ENCODE measurements at regions of chr12 and their contacts with region 1.

Region 1: DNA sequence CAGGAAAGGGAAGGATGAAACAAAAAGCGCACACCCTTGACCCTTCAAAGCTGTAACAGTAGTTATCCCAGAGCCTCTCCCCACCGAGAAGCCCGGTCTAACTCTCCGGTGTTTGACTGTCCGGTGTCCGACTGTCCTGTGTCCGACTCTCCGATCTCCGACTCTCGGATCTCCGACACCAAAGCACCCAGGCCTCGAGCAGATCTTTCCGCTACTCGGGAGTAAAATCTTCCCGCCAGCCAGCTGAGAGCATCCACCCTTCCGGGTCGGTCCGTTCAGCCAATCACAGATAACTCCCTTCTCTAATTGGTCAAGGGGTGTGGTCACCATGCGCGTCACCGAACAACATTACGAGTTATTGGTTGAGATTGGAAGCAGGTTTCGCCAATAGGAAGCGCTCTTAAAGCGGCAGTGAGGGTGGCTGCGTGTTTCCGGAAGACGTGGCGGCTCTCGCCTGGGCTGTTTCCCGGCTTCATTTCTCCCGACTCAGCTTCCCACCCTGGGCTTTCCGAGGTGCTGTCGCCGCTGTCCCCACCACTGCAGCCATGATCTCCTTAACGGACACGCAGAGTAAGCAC is at the starts of genes GOLT1B and RECQL:
- DNase-seq: peak; percentile 93 to 96 (median 95)
- H3K4me3 ChIP-seq: peak within 1 kb of the TSS; percentile 77 to 93
- H3K4me3 Mint-ChIP-seq: no peak within 1 kb of the TSS
- H3K27ac ChIP-seq: peak within 1 kb of the TSS; percentile 78
- H3K27ac Mint-ChIP-seq: peak within 1 kb of the TSS in 1 of 7 donors; percentile 71
- H3K4me1 ChIP-seq: peaks cover 64% of the 10 kb centered on the region
- H3K4me1 Mint-ChIP-seq: peaks cover 28 to 61% (median 46%) of the 10 kb centered on the region in 4 donors
- H3K27me3 ChIP-seq: no peaks in the 10 kb centered on the region
- H3K27me3 Mint-ChIP-seq: no peaks in the 10 kb centered on the region
- total RNA-seq, gene GOLT1B: 33.0 to 39.1 TPM
- total RNA-seq, gene RECQL: 64.0 to 67.8 TPM

Region 2: GRCh38 chr12:21296751-21297406 is 204.6 kb before region 1 on chr12:
- CTCF ChIA-PET with region 1: no interaction called
- POLR2A ChIA-PET with region 1: no interaction called
- intact Hi-C with region 1: loop called (anchors 10 kb)
- DNase-seq: peak in 4 of 5 donors; percentile 3 to 15 (median 14)
- H3K4me3 ChIP-seq: no peak overlapping the region
- H3K4me3 Mint-ChIP-seq: no peak overlapping the region
- H3K27ac ChIP-seq: no peak overlapping the region
- H3K27ac Mint-ChIP-seq: no peak overlapping the region
- H3K4me1 ChIP-seq: no peaks in the 10 kb centered on the region
- H3K4me1 Mint-ChIP-seq: peaks cover 0 to 11% (median 3%) of the 10 kb centered on the region in 4 donors
- H3K27me3 ChIP-seq: no peaks in the 10 kb centered on the region
- H3K27me3 Mint-ChIP-seq: peaks cover 0 to 3% of the 10 kb centered on the region in 2 donors

Region 3: DNA sequence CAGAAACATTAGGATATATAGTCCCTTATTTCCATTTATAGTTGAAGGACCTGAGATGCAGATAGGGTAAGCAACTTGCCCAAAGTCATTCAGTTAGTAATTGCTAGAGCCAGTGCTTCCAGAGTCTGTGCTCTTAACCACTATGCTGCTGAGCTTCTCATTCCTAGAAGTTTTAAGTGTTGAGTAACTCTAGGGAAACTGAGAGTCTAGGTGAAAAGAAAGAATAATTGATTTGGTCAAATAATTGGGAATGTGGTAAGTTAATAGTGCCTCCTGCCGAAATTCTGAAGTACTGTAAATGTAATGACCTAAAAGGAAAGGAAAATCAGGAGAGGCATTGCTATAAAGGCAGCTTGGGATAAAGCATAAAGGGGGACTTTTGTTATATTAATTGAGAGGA is 49.9 kb before region 1 on chr12:
- CTCF ChIA-PET with region 1: no interaction called
- POLR2A ChIA-PET with region 1: interaction called, 16 read pairs
- intact Hi-C with region 1: loop called (anchors 1 kb)
- DNase-seq: no peak
- H3K4me3 ChIP-seq: no peak overlapping the region
- H3K4me3 Mint-ChIP-seq: peak overlapping the region in 1 of 8 donors; percentile 53
- H3K27ac ChIP-seq: no peak overlapping the region
- H3K27ac Mint-ChIP-seq: peak overlapping the region in 5 of 7 donors; percentile 2 to 88 (median 67)
- H3K4me1 ChIP-seq: peaks cover 40% of the 10 kb centered on the region
- H3K4me1 Mint-ChIP-seq: peaks cover 27 to 43% (median 37%) of the 10 kb centered on the region in 4 donors
- H3K27me3 ChIP-seq: no peaks in the 10 kb centered on the region
- H3K27me3 Mint-ChIP-seq: no peaks in the 10 kb centered on the region

Region 4: GRCh38 chr12:21539797-21540196 is 38.3 kb after region 1 on chr12:
- CTCF ChIA-PET with region 1: no interaction called
- POLR2A ChIA-PET with region 1: no interaction called
- intact Hi-C with region 1: no loop called
- DNase-seq: no peak
- H3K4me3 ChIP-seq: no peak overlapping the region
- H3K4me3 Mint-ChIP-seq: no peak overlapping the region
- H3K27ac ChIP-seq: no peak overlapping the region
- H3K27ac Mint-ChIP-seq: no peak overlapping the region
- H3K4me1 ChIP-seq: no peaks in the 10 kb centered on the region
- H3K4me1 Mint-ChIP-seq: no peaks in the 10 kb centered on the region
- H3K27me3 ChIP-seq: no peaks in the 10 kb centered on the region
- H3K27me3 Mint-ChIP-seq: peaks cover 3% of the 10 kb centered on the region in 2 donors

Region 5: DNA sequence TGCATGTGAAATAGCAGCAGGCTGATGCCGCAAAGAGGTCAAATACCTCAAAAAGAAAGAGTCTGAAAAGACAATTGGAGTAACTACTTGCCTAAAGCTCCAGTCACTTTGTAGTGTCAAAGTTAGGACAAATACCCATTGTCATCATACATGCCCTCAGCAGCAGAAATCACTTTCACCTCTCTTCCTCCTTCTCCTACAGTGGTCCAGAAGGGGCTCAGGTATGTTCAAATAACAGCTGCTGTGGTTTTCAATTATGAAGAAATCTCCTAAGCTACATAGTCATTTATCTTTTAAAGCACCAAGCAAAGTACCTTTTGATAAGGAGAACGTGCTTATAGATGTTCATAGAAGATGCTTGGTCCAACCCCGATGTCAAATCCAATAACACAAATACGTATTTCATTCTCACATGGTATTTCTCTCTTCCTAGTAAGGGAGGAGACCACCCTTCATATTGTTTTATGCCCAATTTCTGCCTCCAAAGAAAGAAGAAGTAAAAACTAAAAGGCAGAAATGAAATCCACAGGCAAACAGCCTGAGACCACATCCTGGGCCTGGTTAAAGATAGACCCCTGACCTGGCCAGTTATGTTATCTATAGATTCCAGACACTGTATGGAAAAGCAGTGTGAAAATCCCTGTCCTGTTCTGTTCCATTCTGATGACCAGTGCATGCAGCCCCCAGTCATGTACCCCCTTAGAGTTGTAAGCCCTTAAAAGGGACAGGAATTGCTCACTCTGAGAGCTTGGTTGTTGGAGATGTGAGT is 79.5 kb after region 1 on chr12:
- CTCF ChIA-PET with region 1: no interaction called
- POLR2A ChIA-PET with region 1: no interaction called
- intact Hi-C with region 1: no loop called
- DNase-seq: no peak
- H3K4me3 ChIP-seq: no peak overlapping the region
- H3K4me3 Mint-ChIP-seq: no peak overlapping the region
- H3K27ac ChIP-seq: no peak overlapping the region
- H3K27ac Mint-ChIP-seq: no peak overlapping the region
- H3K4me1 ChIP-seq: no peaks in the 10 kb centered on the region
- H3K4me1 Mint-ChIP-seq: no peaks in the 10 kb centered on the region
- H3K27me3 ChIP-seq: no peaks in the 10 kb centered on the region
- H3K27me3 Mint-ChIP-seq: peaks cover 7 to 9% of the 10 kb centered on the region in 2 donors

Region 6: GRCh38 chr12:21613931-21614330 is 112.5 kb after region 1 on chr12:
- CTCF ChIA-PET with region 1: no interaction called
- POLR2A ChIA-PET with region 1: interaction called, 4 read pairs
- intact Hi-C with region 1: loop called (anchors 5 kb)
- DNase-seq: no peak
- H3K4me3 ChIP-seq: peak overlapping the region in 1 of 2 donors; percentile 18
- H3K4me3 Mint-ChIP-seq: peak overlapping the region in 6 of 8 donors; percentile 0 to 79 (median 42)
- H3K27ac ChIP-seq: peak overlapping the region; percentile 1
- H3K27ac Mint-ChIP-seq: peak overlapping the region in 6 of 7 donors; percentile 65 to 89 (median 86)
- H3K4me1 ChIP-seq: peaks cover 58% of the 10 kb centered on the region
- H3K4me1 Mint-ChIP-seq: peaks cover 41 to 64% (median 53%) of the 10 kb centered on the region in 4 donors
- H3K27me3 ChIP-seq: no peaks in the 10 kb centered on the region
- H3K27me3 Mint-ChIP-seq: no peaks in the 10 kb centered on the region

Region 7: DNA sequence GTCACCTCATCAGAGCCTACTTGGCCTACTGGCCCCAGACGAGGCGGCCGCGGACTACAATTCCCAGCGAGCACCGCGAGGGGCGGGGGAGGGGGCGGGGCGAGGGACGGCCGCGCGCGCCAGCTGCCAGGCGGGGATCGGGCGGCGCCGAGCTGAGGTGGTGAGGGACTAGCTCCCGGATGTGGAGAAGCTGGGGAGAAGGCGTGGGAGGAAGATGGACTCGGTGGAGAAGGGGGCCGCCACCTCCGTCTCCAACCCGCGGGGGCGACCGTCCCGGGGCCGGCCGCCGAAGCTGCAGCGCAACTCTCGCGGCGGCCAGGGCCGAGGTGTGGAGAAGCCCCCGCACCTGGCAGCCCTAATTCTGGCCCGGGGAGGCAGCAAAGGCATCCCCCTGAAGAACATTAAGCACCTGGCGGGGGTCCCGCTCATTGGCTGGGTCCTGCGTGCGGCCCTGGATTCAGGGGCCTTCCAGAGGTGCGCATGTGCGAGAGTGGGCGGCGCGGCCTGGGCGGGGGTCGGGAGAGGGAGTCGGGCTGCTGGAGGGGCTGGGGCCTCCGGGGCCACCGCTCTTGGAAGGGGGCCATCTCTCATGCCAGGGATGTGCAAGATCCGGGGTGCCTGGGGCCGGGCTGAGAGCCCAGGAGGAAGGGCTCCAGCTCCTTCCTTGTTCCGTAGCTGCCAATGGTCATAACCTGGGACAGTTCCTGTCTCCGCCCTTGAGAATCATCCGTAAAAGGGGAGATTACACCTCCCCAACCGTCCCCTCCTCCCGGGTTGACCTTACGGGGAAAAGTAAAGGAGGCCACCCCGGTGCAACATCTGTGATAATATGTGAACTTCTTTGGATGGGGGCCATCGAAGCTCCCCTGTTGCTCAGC is 544.9 kb after region 1 on chr12 and contains the start of gene CMAS:
- CTCF ChIA-PET with region 1: no interaction called
- POLR2A ChIA-PET with region 1: no interaction called
- intact Hi-C with region 1: loop called (anchors 2 kb)
- DNase-seq: peak; percentile 63 to 81 (median 71)
- H3K4me3 ChIP-seq: peak within 1 kb of the TSS; percentile 87 to 91
- H3K4me3 Mint-ChIP-seq: peak within 1 kb of the TSS; percentile 90 to 98 (median 96)
- H3K27ac ChIP-seq: peak within 1 kb of the TSS; percentile 75
- H3K27ac Mint-ChIP-seq: peak within 1 kb of the TSS; percentile 85 to 95 (median 91)
- H3K4me1 ChIP-seq: peaks cover 35% of the 10 kb centered on the region
- H3K4me1 Mint-ChIP-seq: peaks cover 33 to 50% (median 39%) of the 10 kb centered on the region in 4 donors
- H3K27me3 ChIP-seq: no peaks in the 10 kb centered on the region
- H3K27me3 Mint-ChIP-seq: peaks cover 0 to 1% of the 10 kb centered on the region in 2 donors
- total RNA-seq, gene CMAS: 20.1 to 20.3 TPM

Region 8: GRCh38 chr12:22624870-22625761 is 1123.6 kb after region 1 on chr12 and contains the start of gene ETNK1:
- CTCF ChIA-PET with region 1: no interaction called
- POLR2A ChIA-PET with region 1: interaction called, 4 read pairs
- intact Hi-C with region 1: loop called (anchors 10 kb)
- DNase-seq: peak; percentile 76 to 85 (median 81)
- H3K4me3 ChIP-seq: peak within 1 kb of the TSS; percentile 80 to 93
- H3K4me3 Mint-ChIP-seq: peak within 1 kb of the TSS; percentile 92 to 99 (median 93)
- H3K27ac ChIP-seq: peak within 1 kb of the TSS; percentile 80
- H3K27ac Mint-ChIP-seq: peak within 1 kb of the TSS; percentile 93 to 99 (median 98)
- H3K4me1 ChIP-seq: peaks cover 36% of the 10 kb centered on the region
- H3K4me1 Mint-ChIP-seq: peaks cover 25 to 50% (median 38%) of the 10 kb centered on the region in 4 donors
- H3K27me3 ChIP-seq: no peaks in the 10 kb centered on the region
- H3K27me3 Mint-ChIP-seq: peaks cover 0 to 3% of the 10 kb centered on the region in 2 donors
- total RNA-seq, gene ETNK1: 81.1 to 88.1 TPM

Measured in CD4-positive, alpha-beta memory T cell (primary cell).